GM13976 (cell line): ENCODE measurements at regions of chr1 and their contacts with region 1.

Region 1: GRCh38 chr1:56578963-56579875 is at the start of gene PLPP3:
- DNase-seq: peak; percentile 59
- CTCF ChIP-seq: no peak

Region 2: DNA sequence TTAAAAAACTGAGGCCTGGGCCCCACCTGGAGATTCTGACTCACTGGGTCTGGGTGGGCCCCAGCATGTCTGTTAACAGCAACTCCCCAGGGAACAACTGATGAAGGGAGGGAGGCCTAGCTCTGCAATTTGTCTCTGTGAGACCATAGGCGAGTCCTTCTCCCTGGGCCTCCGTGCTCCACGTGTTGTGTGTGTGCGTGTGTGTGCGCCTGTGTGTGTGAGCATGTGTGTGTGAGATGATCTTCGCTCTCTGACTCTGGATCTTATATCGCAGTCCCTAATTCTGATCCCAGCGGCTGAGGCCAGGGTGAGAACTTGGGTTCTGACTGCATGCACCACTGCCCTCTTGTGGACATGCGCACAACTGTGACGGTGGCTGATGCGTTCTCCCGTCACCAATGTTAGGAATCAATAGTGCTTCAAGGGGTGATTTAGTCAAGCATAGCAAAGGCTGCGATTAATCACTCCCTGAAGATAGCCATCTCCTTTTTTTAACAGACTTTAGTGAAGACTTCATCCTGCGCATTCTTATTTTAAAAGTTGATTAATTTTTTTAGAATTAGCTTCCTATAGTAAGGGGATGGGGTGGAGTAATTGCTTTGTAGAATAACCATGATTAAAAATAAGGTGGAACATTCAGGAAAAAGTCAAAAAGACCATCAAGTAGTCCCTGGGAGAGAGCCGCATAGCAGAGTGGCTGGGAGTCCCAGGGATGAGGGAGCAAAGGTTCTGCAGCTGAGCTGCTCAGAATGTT is 1301.7 kb before region 1 on chr1:
- in situ Hi-C with region 1: loop called (anchors 25 kb)
- DNase-seq: peak; percentile 77
- CTCF ChIP-seq: peak; percentile 66

Region 3: DNA sequence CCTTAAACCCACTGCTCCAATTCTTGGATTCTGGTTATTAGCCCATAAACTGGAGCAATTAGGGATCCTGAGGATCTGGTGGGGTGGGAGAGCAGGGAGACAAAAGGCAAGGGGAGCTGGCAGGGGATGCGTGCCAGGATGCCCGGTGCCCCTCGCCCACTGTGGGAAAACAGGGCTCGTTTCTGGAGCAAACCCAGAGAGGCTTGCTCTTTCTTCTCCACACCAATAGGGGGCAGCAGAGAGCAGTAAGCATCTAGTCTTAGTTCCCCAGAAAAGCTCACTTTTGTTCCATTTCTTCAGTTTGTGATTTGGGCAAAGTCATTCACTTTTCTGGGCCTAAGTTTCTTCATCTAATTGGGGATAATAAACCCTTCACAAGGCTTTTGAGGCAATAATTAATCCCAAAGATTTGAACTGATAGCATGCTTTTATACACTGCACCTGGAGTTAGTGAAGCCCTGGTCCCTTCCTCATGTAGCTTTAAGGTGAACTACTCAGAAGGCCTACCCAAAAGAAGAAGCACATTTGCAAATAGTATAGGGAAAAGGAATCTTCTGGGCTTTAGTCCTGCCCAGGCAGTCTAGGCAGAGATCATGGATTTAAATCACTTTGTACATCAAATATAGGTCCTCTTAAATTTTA is 1203.5 kb before region 1 on chr1:
- in situ Hi-C with region 1: loop called (anchors 25 kb)
- DNase-seq: peak; percentile 68
- CTCF ChIP-seq: peak; percentile 81

Region 4: DNA sequence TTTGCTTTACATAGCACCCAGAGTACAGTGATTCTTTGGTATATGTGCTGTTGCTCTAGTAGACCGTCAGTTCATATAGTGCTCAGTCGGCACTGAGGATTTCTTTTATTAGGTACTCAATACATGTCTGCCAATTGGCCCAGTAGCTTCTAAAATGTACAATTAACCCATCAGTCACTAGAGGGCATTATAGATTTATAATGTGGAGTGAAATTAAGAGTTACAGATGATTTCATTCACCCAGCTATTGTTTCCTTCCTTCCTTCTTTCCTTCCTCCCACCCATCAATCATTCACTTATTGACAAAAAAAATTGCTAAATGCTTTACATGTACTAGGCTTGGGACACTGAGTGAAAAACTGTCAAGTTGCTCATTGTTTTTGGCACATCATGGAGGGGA is 1100.5 kb before region 1 on chr1:
- in situ Hi-C with region 1: loop called (anchors 25 kb)
- DNase-seq: peak; percentile 12
- CTCF ChIP-seq: no peak

Region 5: DNA sequence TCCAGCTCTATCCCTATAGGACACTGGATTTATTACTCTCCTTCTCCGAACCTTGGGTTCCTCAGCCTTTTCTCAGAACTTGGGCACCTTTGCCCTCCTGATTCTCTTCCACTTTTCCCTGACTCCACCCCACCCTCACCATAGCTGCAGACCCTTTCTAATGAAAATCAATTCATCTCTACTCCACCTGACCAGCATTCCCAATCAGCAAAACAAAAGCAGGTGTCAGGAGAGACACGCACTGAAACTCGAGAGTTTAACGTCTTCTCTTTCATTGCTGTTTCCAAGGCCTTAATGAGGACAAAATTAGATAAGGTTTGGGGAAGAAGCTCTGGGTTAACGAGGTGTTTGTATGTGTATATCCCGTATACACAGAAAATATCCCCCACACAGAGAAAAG is 208.7 kb before region 1 on chr1:
- in situ Hi-C with region 1: no loop called
- DNase-seq: no peak
- CTCF ChIP-seq: no peak

Region 6: DNA sequence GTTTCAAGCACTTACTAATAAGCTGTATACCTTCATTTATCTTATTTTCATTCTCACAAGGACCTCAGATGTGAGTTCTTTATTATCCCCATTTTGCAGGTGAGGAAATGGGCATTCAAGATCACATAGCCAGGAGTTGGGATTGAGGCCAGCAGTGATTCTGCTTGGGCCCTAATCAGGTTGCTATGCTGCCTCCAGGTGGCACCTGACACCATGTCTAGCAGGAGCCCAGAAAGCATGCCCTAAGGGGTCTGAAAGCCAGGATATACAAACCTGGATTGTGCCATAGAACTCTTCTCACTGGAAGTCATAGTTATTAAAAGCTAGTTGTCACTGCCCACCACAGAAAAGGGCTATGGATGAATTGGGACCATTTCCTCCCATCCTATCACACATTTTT is 178.9 kb after region 1 on chr1:
- in situ Hi-C with region 1: no loop called
- DNase-seq: no peak
- CTCF ChIP-seq: no peak

Region 7: GRCh38 chr1:57033222-57034001 is 454.2 kb after region 1 on chr1:
- in situ Hi-C with region 1: no loop called
- DNase-seq: no peak
- CTCF ChIP-seq: no peak